GM10248 (cell line): ENCODE measurements at regions of chr1 and their contacts with region 1.

Region 1: GRCh38 chr1:103461161-103462105 is 64.1 kb upstream of the RNPC3 start:
- DNase-seq: peak; percentile 20
- CTCF ChIP-seq: peak; percentile 57

Region 2: DNA sequence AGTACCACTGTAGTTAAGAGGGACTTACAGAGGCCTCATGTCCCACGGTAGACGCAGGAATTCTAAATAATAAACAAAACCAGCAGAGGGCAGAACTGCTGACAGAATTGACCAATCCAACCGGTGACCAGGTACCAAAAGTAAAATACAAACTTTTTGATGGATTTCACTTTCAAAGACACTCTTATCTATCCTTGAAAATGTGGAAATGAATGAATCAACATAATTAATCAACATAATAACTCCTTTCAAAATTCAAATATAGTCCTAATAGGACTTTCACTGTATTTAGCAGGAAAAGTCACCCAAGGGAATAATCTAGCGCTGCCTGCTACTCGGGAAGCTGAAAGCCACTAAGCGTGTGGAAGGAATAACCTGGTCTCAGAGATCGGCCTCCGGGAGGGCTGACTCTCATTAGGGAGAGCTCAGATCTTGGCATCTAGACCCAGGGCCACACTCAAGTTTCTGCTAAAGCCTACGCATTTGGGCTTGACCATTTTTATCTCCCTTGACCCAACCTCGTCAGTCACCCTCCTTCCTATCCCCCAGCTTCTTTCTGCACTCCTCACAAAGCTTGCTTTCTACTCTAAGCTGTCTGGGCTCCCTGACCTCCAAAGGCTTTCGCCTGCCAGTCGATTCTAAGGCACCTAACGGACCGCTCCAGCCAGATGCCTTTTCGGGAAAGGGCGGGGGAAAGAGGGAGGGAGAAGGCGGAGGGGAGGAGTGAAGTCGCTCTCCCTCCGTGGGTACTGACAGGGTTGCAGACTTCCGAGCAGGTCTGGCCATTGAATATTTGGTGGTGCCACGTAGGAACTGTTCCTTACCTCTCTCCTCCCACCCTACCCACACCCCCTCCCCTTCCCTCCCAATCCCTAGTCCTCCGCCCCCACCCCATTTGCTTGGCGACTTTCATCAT is 354.7 kb before region 1 on chr1:
- CTCF ChIA-PET with region 1: interaction called, 45 read pairs
- POLR2A ChIA-PET with region 1: no interaction called
- DNase-seq: peak; percentile 34
- CTCF ChIP-seq: peak; percentile 34

Region 3: GRCh38 chr1:103448560-103448959 is 12.9 kb before region 1 on chr1:
- CTCF ChIA-PET with region 1: interaction called, 15 read pairs
- POLR2A ChIA-PET with region 1: no interaction called
- DNase-seq: no peak
- CTCF ChIP-seq: no peak

Region 4: DNA sequence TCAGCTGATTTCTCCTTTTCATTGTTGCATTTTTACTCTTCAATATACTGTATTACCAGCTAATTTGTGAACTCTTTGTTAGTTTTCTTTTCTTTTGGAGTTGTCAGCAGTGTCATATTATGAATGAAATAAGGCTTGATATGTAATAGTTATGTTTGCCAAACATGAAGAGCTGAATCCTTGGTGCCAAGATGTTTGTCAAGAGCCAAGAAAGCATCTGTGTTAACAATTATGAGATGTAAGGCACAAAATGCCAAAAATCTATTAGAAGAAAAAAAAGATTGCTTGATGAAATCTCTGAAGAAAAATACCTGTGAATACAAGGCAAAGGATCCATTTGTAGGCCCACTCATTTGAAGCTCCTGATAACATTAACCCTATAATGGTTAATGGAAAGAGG is 15.7 kb after region 1 on chr1:
- CTCF ChIA-PET with region 1: interaction called, 15 read pairs
- POLR2A ChIA-PET with region 1: no interaction called
- DNase-seq: no peak
- CTCF ChIP-seq: no peak